ENCODE measurements at regions of chr1 and their contacts with region 1.

Region 1: GRCh38 chr1:30123896-30124295 is 599.5 kb downstream of the MATN1 start:
- DNase-seq: peak; percentile 37 to 43
- ATAC-seq: peak in 6 of 8 donors; percentile 37 to 75 (median 50)
- H3K4me3 ChIP-seq: no peak overlapping the region
- H3K27ac ChIP-seq: no peak overlapping the region
- H3K4me1 ChIP-seq: peaks cover 0 to 32% (median 5%) of the 10 kb centered on the region in 9 donors
- H3K27me3 ChIP-seq: no peaks in the 10 kb centered on the region
- CTCF ChIP-seq: no peak

Region 2: GRCh38 chr1:30092051-30092858 is 31.6 kb before region 1 on chr1:
- intact Hi-C with region 1: loop called in 1 of 10 experiments (anchors 2 kb)
- DNase-seq: no peak
- ATAC-seq: no peak
- H3K4me3 ChIP-seq: no peak overlapping the region
- H3K27ac ChIP-seq: no peak overlapping the region
- H3K4me1 ChIP-seq: peaks cover 0 to 16% (median 6%) of the 10 kb centered on the region in 9 donors
- H3K27me3 ChIP-seq: peaks cover 0 to 24% (median 0%) of the 10 kb centered on the region in 7 donors
- CTCF ChIP-seq: no peak

Region 3: DNA sequence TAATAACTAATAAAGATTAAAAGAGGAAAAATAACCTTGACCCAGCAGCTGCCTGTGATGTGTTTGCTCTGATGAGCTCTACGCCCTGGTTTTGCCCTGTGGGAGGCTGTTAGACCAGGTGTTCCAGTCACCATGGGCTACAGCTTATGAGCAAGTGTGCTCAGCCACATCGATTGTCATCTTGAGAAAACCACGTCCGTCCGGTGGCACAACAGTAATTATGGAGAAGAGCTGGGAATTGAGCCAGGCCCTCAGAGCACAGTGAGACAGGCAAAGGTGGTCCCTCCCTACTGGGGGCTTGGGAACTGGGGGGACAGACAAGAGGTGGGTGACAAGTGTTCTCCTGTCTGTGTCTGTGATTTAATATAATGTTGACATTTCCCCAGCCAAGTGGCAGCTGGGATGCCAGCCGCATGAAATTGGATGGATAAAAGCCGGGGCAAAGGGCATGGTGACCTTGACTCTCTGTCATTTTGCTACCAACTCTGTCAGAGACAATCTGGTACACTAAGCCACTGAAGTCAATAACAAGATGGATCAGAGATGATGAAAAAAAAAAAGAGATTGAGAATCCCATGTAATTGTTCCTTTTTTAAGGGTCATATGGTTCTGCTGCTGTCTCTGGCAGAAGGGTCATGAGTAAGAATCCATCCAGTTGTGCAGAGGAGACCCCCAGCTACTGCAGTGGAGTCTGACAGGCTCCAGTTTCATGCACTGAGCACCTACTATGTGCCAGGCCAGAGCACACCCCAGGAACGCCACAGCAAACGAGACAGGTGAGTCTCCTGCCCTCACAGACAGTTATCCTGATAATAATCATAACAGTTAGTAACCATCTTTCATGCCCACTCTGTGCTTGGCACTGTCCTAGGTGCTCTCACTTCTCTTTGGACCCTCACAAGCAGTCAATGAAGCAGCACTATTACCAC is 179.2 kb after region 1 on chr1:
- intact Hi-C with region 1: no loop called
- DNase-seq: no peak
- ATAC-seq: no peak
- H3K4me3 ChIP-seq: no peak overlapping the region
- H3K27ac ChIP-seq: no peak overlapping the region
- H3K4me1 ChIP-seq: no peaks in the 10 kb centered on the region
- H3K27me3 ChIP-seq: peaks cover 0 to 67% (median 38%) of the 10 kb centered on the region in 7 donors
- CTCF ChIP-seq: no peak